MCF 10A (cell line): ENCODE measurements at regions of chr12 and their contacts with region 1.

Region 1: GRCh38 chr12:27940756-27941402 is 31.7 kb downstream of the PTHLH start:
- DNase-seq: peak; percentile 83
- H3K4me3 Mint-ChIP-seq: no peak overlapping the region
- H3K27ac Mint-ChIP-seq: no peak overlapping the region
- H3K4me1 Mint-ChIP-seq: peaks cover 6% of the 10 kb centered on the region
- H3K27me3 Mint-ChIP-seq: no peaks in the 10 kb centered on the region
- CTCF ChIP-seq: peak; percentile 70

Region 2: DNA sequence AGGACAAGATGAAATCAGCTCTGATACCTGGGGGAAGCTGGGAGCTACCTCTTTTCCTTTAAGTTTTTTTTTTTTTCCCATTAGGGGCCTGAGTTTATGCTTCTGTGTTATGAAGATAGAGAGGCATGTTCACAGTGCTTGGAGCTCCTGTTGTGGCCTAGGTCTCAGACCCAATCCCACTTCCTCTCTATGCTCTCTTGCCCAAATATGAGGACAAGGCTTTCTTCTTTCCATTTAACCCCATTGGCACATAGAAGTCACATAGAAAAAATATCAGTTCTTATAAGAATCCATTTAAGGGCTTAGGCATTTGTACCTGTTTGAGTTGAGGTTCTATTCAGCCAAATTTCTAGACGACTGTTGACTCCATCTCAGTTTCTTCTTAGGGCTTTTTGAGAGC is 217.7 kb before region 1 on chr12:
- CTCF ChIA-PET with region 1: no interaction called
- POLR2A ChIA-PET with region 1: no interaction called
- intact Hi-C with region 1: no loop called
- DNase-seq: no peak
- H3K4me3 Mint-ChIP-seq: no peak overlapping the region
- H3K27ac Mint-ChIP-seq: peak overlapping the region; percentile 23
- H3K4me1 Mint-ChIP-seq: no peaks in the 10 kb centered on the region
- H3K27me3 Mint-ChIP-seq: no peaks in the 10 kb centered on the region
- CTCF ChIP-seq: no peak

Region 3: GRCh38 chr12:27743601-27744000 is 197.3 kb before region 1 on chr12:
- CTCF ChIA-PET with region 1: interaction called, 10 read pairs
- POLR2A ChIA-PET with region 1: interaction called, 3 read pairs
- intact Hi-C with region 1: loop called (anchors 5 kb)
- DNase-seq: no peak
- H3K4me3 Mint-ChIP-seq: no peak overlapping the region
- H3K27ac Mint-ChIP-seq: no peak overlapping the region
- H3K4me1 Mint-ChIP-seq: peaks cover 24% of the 10 kb centered on the region
- H3K27me3 Mint-ChIP-seq: no peaks in the 10 kb centered on the region
- CTCF ChIP-seq: no peak

Region 4: GRCh38 chr12:27779920-27780611 is 160.8 kb before region 1 on chr12 and contains the starts of genes KLHL42 and MANSC4:
- CTCF ChIA-PET with region 1: no interaction called
- POLR2A ChIA-PET with region 1: no interaction called
- intact Hi-C with region 1: loop called (anchors 2 kb)
- DNase-seq: peak; percentile 67
- H3K4me3 Mint-ChIP-seq: peak within 1 kb of the TSS; percentile 77
- H3K27ac Mint-ChIP-seq: peak within 1 kb of the TSS; percentile 63
- H3K4me1 Mint-ChIP-seq: peaks cover 21% of the 10 kb centered on the region
- H3K27me3 Mint-ChIP-seq: no peaks in the 10 kb centered on the region
- CTCF ChIP-seq: no peak
- total RNA-seq, gene KLHL42: 32.5 and 37.6 TPM in 2 replicates
- total RNA-seq, gene MANSC4: not detected in 2 replicates

Region 5: GRCh38 chr12:27814851-27815591 is 125.9 kb before region 1 on chr12:
- CTCF ChIA-PET with region 1: no interaction called
- POLR2A ChIA-PET with region 1: no interaction called
- intact Hi-C with region 1: no loop called
- DNase-seq: no peak
- H3K4me3 Mint-ChIP-seq: no peak overlapping the region
- H3K27ac Mint-ChIP-seq: no peak overlapping the region
- H3K4me1 Mint-ChIP-seq: peaks cover 12% of the 10 kb centered on the region
- H3K27me3 Mint-ChIP-seq: no peaks in the 10 kb centered on the region
- CTCF ChIP-seq: no peak

Region 6: GRCh38 chr12:27840244-27840999 is 100.5 kb before region 1 on chr12:
- CTCF ChIA-PET with region 1: interaction called, 3 read pairs
- POLR2A ChIA-PET with region 1: interaction called, 3 read pairs
- intact Hi-C with region 1: loop called (anchors 5 kb)
- DNase-seq: peak; percentile 7
- H3K4me3 Mint-ChIP-seq: no peak overlapping the region
- H3K27ac Mint-ChIP-seq: no peak overlapping the region
- H3K4me1 Mint-ChIP-seq: peaks cover 4% of the 10 kb centered on the region
- H3K27me3 Mint-ChIP-seq: no peaks in the 10 kb centered on the region
- CTCF ChIP-seq: peak; percentile 37

Region 7: GRCh38 chr12:27915021-27915420 is 25.9 kb before region 1 on chr12:
- CTCF ChIA-PET with region 1: no interaction called
- POLR2A ChIA-PET with region 1: no interaction called
- intact Hi-C with region 1: no loop called
- DNase-seq: no peak
- H3K4me3 Mint-ChIP-seq: no peak overlapping the region
- H3K27ac Mint-ChIP-seq: no peak overlapping the region
- H3K4me1 Mint-ChIP-seq: no peaks in the 10 kb centered on the region
- H3K27me3 Mint-ChIP-seq: no peaks in the 10 kb centered on the region
- CTCF ChIP-seq: no peak

Region 8: DNA sequence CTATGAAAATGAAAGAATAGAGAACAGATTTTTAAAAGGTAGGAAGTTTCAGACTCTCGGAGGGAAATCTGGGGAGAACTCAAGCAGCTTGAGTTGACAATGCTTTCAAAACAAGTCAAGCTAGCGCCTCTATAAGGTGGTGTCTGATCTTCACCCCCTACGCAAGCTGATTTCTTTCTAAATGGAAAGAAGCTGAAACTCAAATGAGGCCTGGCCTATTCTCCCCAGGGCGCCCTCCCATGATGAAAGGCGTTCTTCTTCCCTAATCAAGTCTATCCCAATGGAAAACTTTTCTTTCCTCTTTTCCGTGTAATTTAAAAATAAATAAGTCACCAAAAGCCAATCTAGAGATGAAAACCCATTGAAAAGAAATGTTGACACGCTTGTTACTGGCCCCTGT is 11.0 kb after region 1 on chr12:
- CTCF ChIA-PET with region 1: interaction called, 10 read pairs
- POLR2A ChIA-PET with region 1: no interaction called
- intact Hi-C with region 1: no loop called
- DNase-seq: no peak
- H3K4me3 Mint-ChIP-seq: no peak overlapping the region
- H3K27ac Mint-ChIP-seq: no peak overlapping the region
- H3K4me1 Mint-ChIP-seq: no peaks in the 10 kb centered on the region
- H3K27me3 Mint-ChIP-seq: no peaks in the 10 kb centered on the region
- CTCF ChIP-seq: no peak

Region 9: GRCh38 chr12:28390761-28391385 is 450.0 kb after region 1 on chr12:
- CTCF ChIA-PET with region 1: no interaction called
- POLR2A ChIA-PET with region 1: no interaction called
- intact Hi-C with region 1: no loop called
- DNase-seq: peak; percentile 46
- H3K4me3 Mint-ChIP-seq: no peak overlapping the region
- H3K27ac Mint-ChIP-seq: no peak overlapping the region
- H3K4me1 Mint-ChIP-seq: peaks cover 5% of the 10 kb centered on the region
- H3K27me3 Mint-ChIP-seq: no peaks in the 10 kb centered on the region
- CTCF ChIP-seq: no peak

Region 10: GRCh38 chr12:28872654-28873268 is 931.9 kb after region 1 on chr12:
- CTCF ChIA-PET with region 1: interaction called, 4 read pairs
- POLR2A ChIA-PET with region 1: no interaction called
- intact Hi-C with region 1: loop called (anchors 5 kb)
- DNase-seq: peak; percentile 69
- H3K4me3 Mint-ChIP-seq: no peak overlapping the region
- H3K27ac Mint-ChIP-seq: no peak overlapping the region
- H3K4me1 Mint-ChIP-seq: peaks cover 21% of the 10 kb centered on the region
- H3K27me3 Mint-ChIP-seq: no peaks in the 10 kb centered on the region
- CTCF ChIP-seq: peak; percentile 77